GM12878 (cell line): ENCODE measurements at regions of chr3 and their contacts with region 1.

Region 1: GRCh38 chr3:15815696-15816095 is 17.9 kb upstream of the ANKRD28 start:
- DNase-seq: no peak
- ATAC-seq: peak; percentile 55
- H3K4me3 ChIP-seq: no peak overlapping the region
- H3K27ac ChIP-seq: no peak overlapping the region
- H3K4me1 ChIP-seq: peaks cover 39% of the 10 kb centered on the region
- H3K27me3 ChIP-seq: no peaks in the 10 kb centered on the region
- CTCF ChIP-seq: peak in 1 of 3 experiments; percentile 29; a peak in 2 of 6 replicates
- EP300 ChIP-seq: no peak
- POLR2A ChIP-seq: no peak
- RAD21 ChIP-seq: peak; percentile 64

Region 2: DNA sequence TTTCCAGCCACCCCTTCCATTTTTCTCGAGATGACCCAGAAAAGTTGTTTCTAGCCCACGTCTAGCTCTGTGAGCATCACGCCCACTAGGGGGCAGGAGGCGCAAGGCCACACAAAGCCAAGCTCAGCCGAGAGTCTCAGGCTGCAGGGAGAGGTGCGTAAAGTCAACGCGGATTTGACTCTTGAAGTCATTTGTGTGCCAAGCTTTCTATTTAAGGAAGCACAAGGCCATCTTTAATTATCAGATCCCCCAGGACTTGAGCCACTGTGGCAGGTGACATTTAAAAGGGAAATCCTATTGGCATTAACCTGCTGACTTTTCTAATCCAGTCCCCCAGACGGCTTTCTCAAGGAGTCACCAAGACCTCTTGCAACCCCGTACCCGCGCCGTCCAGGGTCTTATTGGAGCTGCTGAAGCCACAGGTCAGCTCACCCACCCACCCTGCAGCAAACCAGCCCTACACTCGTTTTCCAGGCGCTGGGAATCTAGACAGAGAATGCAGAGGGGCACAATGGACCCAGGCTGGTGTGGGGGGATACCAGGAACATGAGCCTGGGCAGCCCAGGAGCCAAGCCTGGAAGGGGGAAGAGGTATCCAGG is 547.6 kb before region 1 on chr3:
- CTCF ChIA-PET with region 1: no interaction called
- POLR2A ChIA-PET with region 1: no interaction called
- RAD21 ChIA-PET with region 1: no interaction called
- SMC1A ChIA-PET with region 1: no interaction called
- in situ Hi-C with region 1: no loop called
- intact Hi-C with region 1: no loop called
- DNase-seq: no peak
- ATAC-seq: peak; percentile 80
- H3K4me3 ChIP-seq: no peak overlapping the region
- H3K27ac ChIP-seq: no peak overlapping the region
- H3K4me1 ChIP-seq: peaks cover 39% of the 10 kb centered on the region
- H3K27me3 ChIP-seq: no peaks in the 10 kb centered on the region
- CTCF ChIP-seq: peak; percentile 95 to 99 (median 97); a peak in 5 of 6 replicates
- EP300 ChIP-seq: no peak
- POLR2A ChIP-seq: no peak
- RAD21 ChIP-seq: peak; percentile 100

Region 3: GRCh38 chr3:15601397-15602145 is 214.1 kb before region 1 on chr3 and contains the starts of genes BTD and HACL1:
- CTCF ChIA-PET with region 1: interaction called, 10 read pairs
- POLR2A ChIA-PET with region 1: no interaction called
- RAD21 ChIA-PET with region 1: interaction called, 3 read pairs
- SMC1A ChIA-PET with region 1: interaction called, 6 read pairs
- in situ Hi-C with region 1: no loop called
- intact Hi-C with region 1: no loop called
- DNase-seq: peak; percentile 99
- ATAC-seq: peak; percentile 96
- H3K4me3 ChIP-seq: peak within 1 kb of the TSS; percentile 91
- H3K27ac ChIP-seq: peak within 1 kb of the TSS; percentile 81
- H3K4me1 ChIP-seq: no peaks in the 10 kb centered on the region; the same call in 1 of the 2 replicates
- H3K27me3 ChIP-seq: no peaks in the 10 kb centered on the region
- CTCF ChIP-seq: peak in 2 of 3 experiments; percentile 28 to 40; a peak in 5 of 6 replicates
- EP300 ChIP-seq: no peak
- POLR2A ChIP-seq: peak; percentile 86
- RAD21 ChIP-seq: no peak
- polyA plus RNA-seq, gene BTD: 6.1 to 9.2 TPM
- polyA plus RNA-seq, gene HACL1: 34.1 to 40.3 TPM

Region 4: GRCh38 chr3:15693355-15693754 is 122.3 kb before region 1 on chr3:
- CTCF ChIA-PET with region 1: interaction called, 10 read pairs
- POLR2A ChIA-PET with region 1: no interaction called
- RAD21 ChIA-PET with region 1: interaction called, 4 read pairs
- SMC1A ChIA-PET with region 1: interaction called, 15 read pairs
- in situ Hi-C with region 1: no loop called
- intact Hi-C with region 1: loop called (anchors 5 kb)
- DNase-seq: no peak
- ATAC-seq: peak; percentile 61
- H3K4me3 ChIP-seq: no peak overlapping the region
- H3K27ac ChIP-seq: no peak overlapping the region
- H3K4me1 ChIP-seq: no peaks in the 10 kb centered on the region
- H3K27me3 ChIP-seq: no peaks in the 10 kb centered on the region
- CTCF ChIP-seq: peak in 1 of 3 experiments; percentile 7; a peak in 1 of 6 replicates
- EP300 ChIP-seq: no peak
- POLR2A ChIP-seq: no peak
- RAD21 ChIP-seq: peak; percentile 44

Region 5: GRCh38 chr3:15781637-15782402 is 33.9 kb before region 1 on chr3:
- CTCF ChIA-PET with region 1: interaction called, 7 read pairs
- POLR2A ChIA-PET with region 1: no interaction called
- RAD21 ChIA-PET with region 1: interaction called, 14 read pairs
- SMC1A ChIA-PET with region 1: interaction called, 13 read pairs
- in situ Hi-C with region 1: no loop called
- intact Hi-C with region 1: no loop called
- DNase-seq: no peak
- ATAC-seq: no peak
- H3K4me3 ChIP-seq: no peak overlapping the region
- H3K27ac ChIP-seq: no peak overlapping the region
- H3K4me1 ChIP-seq: no peaks in the 10 kb centered on the region
- H3K27me3 ChIP-seq: no peaks in the 10 kb centered on the region
- CTCF ChIP-seq: no peak
- EP300 ChIP-seq: no peak
- POLR2A ChIP-seq: no peak
- RAD21 ChIP-seq: no peak

Region 6: GRCh38 chr3:15933439-15934139 is 117.9 kb after region 1 on chr3:
- CTCF ChIA-PET with region 1: no interaction called
- POLR2A ChIA-PET with region 1: no interaction called
- RAD21 ChIA-PET with region 1: no interaction called
- SMC1A ChIA-PET with region 1: no interaction called
- in situ Hi-C with region 1: no loop called
- intact Hi-C with region 1: no loop called
- DNase-seq: no peak
- ATAC-seq: no peak
- H3K4me3 ChIP-seq: no peak overlapping the region
- H3K27ac ChIP-seq: no peak overlapping the region
- H3K4me1 ChIP-seq: no peaks in the 10 kb centered on the region
- H3K27me3 ChIP-seq: no peaks in the 10 kb centered on the region
- CTCF ChIP-seq: no peak
- EP300 ChIP-seq: no peak
- POLR2A ChIP-seq: no peak
- RAD21 ChIP-seq: no peak

Region 7: GRCh38 chr3:15953841-15954240 is 138.1 kb after region 1 on chr3:
- CTCF ChIA-PET with region 1: interaction called, 14 read pairs
- POLR2A ChIA-PET with region 1: no interaction called
- RAD21 ChIA-PET with region 1: no interaction called
- SMC1A ChIA-PET with region 1: interaction called, 7 read pairs
- in situ Hi-C with region 1: no loop called
- intact Hi-C with region 1: no loop called
- DNase-seq: no peak
- ATAC-seq: peak; percentile 74
- H3K4me3 ChIP-seq: no peak overlapping the region
- H3K27ac ChIP-seq: no peak overlapping the region
- H3K4me1 ChIP-seq: no peaks in the 10 kb centered on the region
- H3K27me3 ChIP-seq: no peaks in the 10 kb centered on the region
- CTCF ChIP-seq: peak; percentile 17 to 30 (median 19); a peak in 2 of 6 replicates
- EP300 ChIP-seq: no peak
- POLR2A ChIP-seq: no peak
- RAD21 ChIP-seq: peak; percentile 33; the same call in 1 of the 2 replicates

Region 8: DNA sequence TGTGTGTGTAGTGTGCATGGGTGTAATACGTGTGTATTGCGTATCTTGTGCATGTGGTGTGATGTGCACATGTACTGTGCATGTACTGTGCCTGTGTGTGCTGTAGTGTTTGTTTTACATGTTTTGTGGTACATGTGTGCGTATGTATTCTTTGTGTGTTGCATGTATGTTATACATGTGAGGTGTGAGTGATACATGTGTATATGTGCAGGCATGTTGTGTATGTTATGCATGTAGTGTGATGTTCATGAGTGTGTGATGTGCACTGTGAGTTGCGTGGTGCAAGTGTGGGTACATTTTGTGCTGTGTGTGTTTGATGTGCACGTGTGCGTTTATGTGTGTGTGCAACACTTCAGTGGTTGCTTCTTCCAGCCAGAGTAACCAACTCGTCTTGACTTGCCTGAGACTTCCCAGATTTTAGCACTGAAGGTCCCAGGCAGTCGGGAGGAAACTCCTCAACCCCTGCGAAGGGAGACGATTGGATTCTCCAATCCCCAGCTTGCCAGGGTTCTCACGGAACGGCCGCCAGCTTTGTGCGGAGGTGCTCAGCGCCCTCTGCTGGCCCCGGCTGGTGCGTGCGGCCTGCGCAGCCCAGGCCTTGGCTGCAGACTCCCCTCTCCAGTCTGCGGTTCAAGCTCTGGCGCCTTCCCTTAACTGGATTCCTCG is 362.4 kb after region 1 on chr3:
- CTCF ChIA-PET with region 1: interaction called, 18 read pairs
- POLR2A ChIA-PET with region 1: no interaction called
- RAD21 ChIA-PET with region 1: interaction called, 5 read pairs
- SMC1A ChIA-PET with region 1: interaction called, 5 read pairs
- in situ Hi-C with region 1: loop called (anchors 5 kb)
- intact Hi-C with region 1: loop called (anchors 1 kb)
- DNase-seq: no peak
- ATAC-seq: peak; percentile 96
- H3K4me3 ChIP-seq: no peak overlapping the region
- H3K27ac ChIP-seq: no peak overlapping the region
- H3K4me1 ChIP-seq: no peaks in the 10 kb centered on the region
- H3K27me3 ChIP-seq: peaks cover 0 to 3% of the 10 kb centered on the region in 2 experiments; a peak in 2 of 4 replicates
- CTCF ChIP-seq: peak; percentile 89 to 99 (median 98)
- EP300 ChIP-seq: no peak
- POLR2A ChIP-seq: no peak
- RAD21 ChIP-seq: peak; percentile 95